ENCODE measurements at regions of chr12 and their contacts with region 1.

Region 1: GRCh38 chr12:102484428-102484958 is 4.1 kb upstream of the IGF1 start:
- DNase-seq: peak; percentile 21 to 44
- ATAC-seq: peak in 6 of 8 donors; percentile 10 to 80 (median 24)
- H3K4me3 ChIP-seq: peak overlapping the region in 5 of 10 donors; percentile 9 to 30 (median 21)
- H3K27ac ChIP-seq: peak overlapping the region in 7 of 10 donors; percentile 9 to 63 (median 42)
- H3K4me1 ChIP-seq: peaks cover 0 to 34% (median 4%) of the 10 kb centered on the region in 9 donors
- H3K27me3 ChIP-seq: no peaks in the 10 kb centered on the region
- CTCF ChIP-seq: peak; percentile 69 to 94 (median 90)

Region 2: DNA sequence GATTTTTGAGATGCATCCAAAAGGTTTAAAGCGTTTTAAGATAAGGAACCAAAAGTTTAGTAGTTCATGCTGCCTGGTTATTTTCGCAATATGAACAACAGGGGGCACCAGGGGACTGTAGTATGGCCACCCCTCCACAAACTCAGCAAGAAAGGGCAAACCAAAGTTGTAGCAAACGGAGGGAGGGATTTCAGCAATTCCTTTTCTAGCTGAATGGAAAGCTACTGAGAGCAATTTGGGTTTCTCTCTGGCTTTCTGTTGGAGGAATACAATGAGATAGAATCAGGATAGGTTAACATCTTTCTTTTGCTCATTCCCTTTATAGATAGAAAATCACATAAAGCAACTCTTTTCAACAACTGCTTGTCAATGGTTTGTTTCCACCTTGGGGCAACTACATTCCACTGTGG is 544.6 kb before region 1 on chr12:
- intact Hi-C with region 1: loop called in 8 of 10 experiments (anchors 5 to 10 kb)
- DNase-seq: peak in 1 of 2 donors; percentile 50
- ATAC-seq: peak in 5 of 8 donors; percentile 31 to 52 (median 46)
- H3K4me3 ChIP-seq: no peak overlapping the region
- H3K27ac ChIP-seq: peak overlapping the region in 6 of 10 donors; percentile 32 to 83 (median 62)
- H3K4me1 ChIP-seq: peaks cover 0 to 39% (median 3%) of the 10 kb centered on the region in 9 donors
- H3K27me3 ChIP-seq: no peaks in the 10 kb centered on the region
- CTCF ChIP-seq: peak in 8 of 9 donors; percentile 58 to 80 (median 70)

Region 3: DNA sequence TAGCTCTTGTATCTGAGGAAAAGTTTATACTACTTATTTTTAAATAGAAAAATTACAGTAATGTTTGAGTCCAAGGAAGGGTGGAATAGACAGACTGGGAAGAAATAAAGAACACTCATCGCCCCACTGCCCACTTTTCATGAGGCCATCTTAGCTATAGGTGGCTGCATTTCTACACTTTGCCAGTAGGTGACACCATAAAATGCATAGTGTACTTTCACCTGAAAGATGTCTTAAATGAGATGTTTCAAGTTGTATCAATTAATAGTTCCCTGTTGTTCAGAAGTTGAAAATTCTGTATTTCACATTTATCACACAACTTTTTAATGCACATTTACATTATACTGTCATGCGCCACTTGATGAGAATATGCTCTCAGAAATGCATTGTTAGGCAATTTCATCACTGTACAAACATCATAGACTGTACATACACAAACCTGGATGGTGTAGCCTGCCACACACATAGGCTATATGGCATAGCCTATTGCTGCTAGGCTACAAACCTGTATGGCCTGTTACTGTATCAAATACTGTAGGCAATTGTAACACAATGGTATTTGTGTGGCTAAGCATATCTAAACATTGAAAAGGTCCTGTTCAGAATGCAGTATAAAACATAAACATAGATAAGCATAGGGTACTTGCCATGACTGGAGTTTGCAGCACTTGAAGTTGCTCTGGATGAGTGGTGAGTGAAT is 314.4 kb before region 1 on chr12:
- intact Hi-C with region 1: loop called in 7 of 10 experiments (anchors 2 to 10 kb)
- DNase-seq: no peak
- ATAC-seq: peak in 1 of 8 donors; percentile 65
- H3K4me3 ChIP-seq: no peak overlapping the region
- H3K27ac ChIP-seq: no peak overlapping the region
- H3K4me1 ChIP-seq: peaks cover 0 to 10% (median 0%) of the 10 kb centered on the region in 9 donors
- H3K27me3 ChIP-seq: no peaks in the 10 kb centered on the region
- CTCF ChIP-seq: peak; percentile 24 to 74 (median 58)

Region 4: GRCh38 chr12:102539651-102540553 is 55.4 kb after region 1 on chr12:
- intact Hi-C with region 1: no loop called
- DNase-seq: no peak
- ATAC-seq: no peak
- H3K4me3 ChIP-seq: no peak overlapping the region
- H3K27ac ChIP-seq: no peak overlapping the region
- H3K4me1 ChIP-seq: peaks cover 0 to 8% (median 0%) of the 10 kb centered on the region in 9 donors
- H3K27me3 ChIP-seq: peaks cover 0 to 6% (median 0%) of the 10 kb centered on the region in 7 donors
- CTCF ChIP-seq: no peak

Region 5: GRCh38 chr12:102769319-102769916 is 284.9 kb after region 1 on chr12:
- intact Hi-C with region 1: loop called in 1 of 10 experiments (anchors 5 kb)
- DNase-seq: peak; percentile 23 to 33
- ATAC-seq: peak in 7 of 8 donors; percentile 67 to 86 (median 81)
- H3K4me3 ChIP-seq: no peak overlapping the region
- H3K27ac ChIP-seq: peak overlapping the region in 2 of 10 donors; percentile 17 to 28
- H3K4me1 ChIP-seq: no peaks in the 10 kb centered on the region
- H3K27me3 ChIP-seq: peaks cover 0 to 12% (median 0%) of the 10 kb centered on the region in 7 donors
- CTCF ChIP-seq: peak; percentile 22 to 69 (median 58)